Activated T-helper 2 cell treated with anti-CD3 and anti-CD28 coated beads, Interferon-gamma antibody, Interleukin-2, Interleukin-4, amounts not matched to agents 10 μg/mL and 5 μg/mL and 100 μg/mL, durations not matched to agents 14 hours and 24 hours and 36 hours (primary cell): ENCODE measurements at regions of chr5 and their contacts with region 1.

Region 1: GRCh38 chr5:135800656-135801055 is 33.8 kb upstream of the SLC25A48 start:
- DNase-seq: no peak
- H3K4me3 Mint-ChIP-seq: no peak overlapping the region
- H3K27ac Mint-ChIP-seq: no peak overlapping the region
- H3K4me1 Mint-ChIP-seq: no peaks in the 10 kb centered on the region
- H3K27me3 Mint-ChIP-seq: no peaks in the 10 kb centered on the region

Region 2: GRCh38 chr5:135739383-135739981 is 61.2 kb before region 1 on chr5:
- intact Hi-C with region 1: no loop called
- DNase-seq: no peak
- H3K4me3 Mint-ChIP-seq: no peak overlapping the region
- H3K27ac Mint-ChIP-seq: no peak overlapping the region
- H3K4me1 Mint-ChIP-seq: no peaks in the 10 kb centered on the region
- H3K27me3 Mint-ChIP-seq: peaks cover 2% of the 10 kb centered on the region

Region 3: GRCh38 chr5:135759149-135759784 is 41.4 kb before region 1 on chr5:
- intact Hi-C with region 1: loop called (anchors 5 kb)
- DNase-seq: no peak
- H3K4me3 Mint-ChIP-seq: no peak overlapping the region
- H3K27ac Mint-ChIP-seq: no peak overlapping the region
- H3K4me1 Mint-ChIP-seq: no peaks in the 10 kb centered on the region
- H3K27me3 Mint-ChIP-seq: no peaks in the 10 kb centered on the region